ENCODE measurements at regions of chr9 and their contacts with region 1.

Region 1: GRCh38 chr9:128117613-128118471 is 9.7 kb downstream of the PTGES2 start:
- DNase-seq: peak; percentile 56
- H3K4me3 ChIP-seq: peak overlapping the region in 1 of 4 donors; percentile 4
- H3K27ac ChIP-seq: no peak overlapping the region
- H3K4me1 ChIP-seq: peaks cover 0 to 12% (median 5%) of the 10 kb centered on the region in 3 donors
- H3K27me3 ChIP-seq: no peaks in the 10 kb centered on the region
- CTCF ChIP-seq: peak; percentile 100
- POLR2A ChIP-seq: no peak

Region 2: GRCh38 chr9:128034821-128035764 is 82.7 kb before region 1 on chr9:
- intact Hi-C with region 1: loop called (anchors 10 kb)
- DNase-seq: no peak
- H3K4me3 ChIP-seq: no peak overlapping the region
- H3K27ac ChIP-seq: peak overlapping the region; percentile 5 to 83 (median 68)
- H3K4me1 ChIP-seq: peaks cover 3 to 24% (median 5%) of the 10 kb centered on the region in 3 donors
- H3K27me3 ChIP-seq: no peaks in the 10 kb centered on the region
- CTCF ChIP-seq: peak; percentile 78 to 98 (median 96)
- POLR2A ChIP-seq: no peak